ENCODE measurements at regions of chr14 and their contacts with region 1.

Region 1: DNA sequence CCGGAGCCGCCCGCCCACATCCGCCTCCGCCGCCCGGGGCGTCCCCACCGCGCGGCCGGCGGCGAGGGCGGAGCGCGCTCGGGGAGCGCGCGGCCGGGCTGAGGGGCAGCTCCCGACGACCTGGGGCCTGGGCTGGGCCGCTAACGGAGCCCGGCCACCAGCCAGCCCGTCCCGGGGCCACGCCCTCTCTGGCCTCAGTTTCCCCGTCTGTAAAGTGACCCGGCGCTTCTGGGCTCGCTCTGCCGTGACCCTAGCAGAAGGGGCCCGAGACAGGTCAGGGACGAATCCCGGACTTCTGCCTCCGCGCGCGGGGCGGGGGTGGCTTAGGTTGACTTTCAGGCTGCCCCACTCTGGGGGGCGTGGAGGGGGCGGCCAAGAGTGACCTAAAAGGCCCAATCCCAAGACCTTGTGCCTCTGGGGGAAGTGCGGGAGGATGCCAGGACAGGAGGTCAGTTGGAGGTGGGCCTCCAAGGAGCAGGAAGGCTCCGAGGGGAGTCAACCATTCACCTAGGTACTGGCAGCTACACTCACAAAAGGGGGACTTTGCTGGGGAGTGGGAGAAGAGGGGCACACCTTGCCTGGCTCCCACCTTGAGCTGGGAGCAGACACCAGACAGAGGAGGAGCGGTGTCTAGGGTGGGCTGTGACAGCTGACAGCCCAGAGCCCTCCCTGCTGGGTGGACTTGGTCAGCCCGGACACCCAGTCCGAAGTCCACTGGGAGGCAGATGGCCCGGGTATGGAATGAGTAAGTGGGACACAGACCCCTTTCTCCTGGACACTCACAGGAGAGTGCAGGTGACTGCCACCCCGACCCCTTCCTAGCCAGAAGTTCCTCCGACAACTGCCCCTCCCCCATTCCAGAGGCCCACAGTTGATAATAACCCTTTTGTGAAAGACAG is 489 bp upstream of the AKT1 start:
- DNase-seq: peak in 1 of 2 experiments; percentile 38
- H3K4me3 ChIP-seq: peak overlapping the region; percentile 56; the same call in 1 of the 2 replicates
- H3K27ac ChIP-seq: no peak overlapping the region
- H3K4me1 ChIP-seq: peaks cover 25% of the 10 kb centered on the region
- H3K27me3 ChIP-seq: no peaks in the 10 kb centered on the region
- CTCF ChIP-seq: no peak

Region 2: GRCh38 chr14:104820669-104821228 is 24.7 kb after region 1 on chr14:
- CTCF ChIA-PET with region 1: no interaction called
- POLR2A ChIA-PET with region 1: interaction called, 15 read pairs
- intact Hi-C with region 1: no loop called
- DNase-seq: peak in 1 of 2 experiments; percentile 11
- H3K4me3 ChIP-seq: no peak overlapping the region
- H3K27ac ChIP-seq: no peak overlapping the region
- H3K4me1 ChIP-seq: peaks cover 11% of the 10 kb centered on the region; the same call in 1 of the 2 replicates
- H3K27me3 ChIP-seq: no peaks in the 10 kb centered on the region
- CTCF ChIP-seq: no peak

Region 3: DNA sequence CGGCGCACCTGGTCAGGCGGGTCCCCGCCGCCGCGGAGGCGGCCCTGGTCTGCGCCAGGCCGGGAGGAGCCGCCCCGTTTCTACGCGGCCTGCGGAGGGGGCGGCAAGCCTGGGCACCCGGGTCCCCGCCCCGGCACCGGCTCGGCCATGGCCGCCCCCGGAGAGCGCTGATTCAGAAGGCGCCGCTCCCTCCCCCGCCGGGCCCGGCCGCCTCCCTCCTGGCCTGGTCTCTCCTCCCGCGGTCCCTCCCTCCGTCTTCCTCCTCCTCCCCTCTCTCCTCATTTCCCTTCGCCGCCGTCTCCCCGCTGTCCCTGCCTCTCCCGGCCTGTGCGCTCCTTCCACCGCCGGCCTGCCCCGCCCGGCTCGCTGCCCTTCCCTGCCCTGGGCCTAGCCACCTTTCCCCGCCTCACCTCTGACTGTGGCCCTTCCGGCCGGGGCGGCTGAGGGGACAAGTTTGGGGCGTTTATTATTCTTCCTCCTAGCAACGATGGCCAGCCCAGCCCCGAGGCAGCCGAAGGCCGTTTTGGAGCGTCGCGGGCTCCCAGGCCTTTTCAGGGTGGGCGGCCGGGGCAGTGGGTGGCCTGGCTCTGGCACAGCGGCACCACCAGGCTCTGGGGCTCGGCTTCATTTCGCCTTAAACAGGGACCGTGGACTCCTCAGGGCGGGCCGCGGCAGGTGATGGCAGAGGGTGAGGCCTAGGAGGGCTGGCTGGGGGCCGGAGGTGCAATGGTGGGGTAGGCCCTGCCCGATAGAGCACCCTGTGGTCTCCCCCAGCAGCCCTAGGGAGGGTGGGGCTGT is 69.8 kb after region 1 on chr14:
- CTCF ChIA-PET with region 1: no interaction called
- POLR2A ChIA-PET with region 1: no interaction called
- intact Hi-C with region 1: loop called (anchors 2 kb)
- DNase-seq: peak; percentile 54 to 70
- H3K4me3 ChIP-seq: peak overlapping the region; percentile 95
- H3K27ac ChIP-seq: peak overlapping the region; percentile 54
- H3K4me1 ChIP-seq: peaks cover 11% of the 10 kb centered on the region
- H3K27me3 ChIP-seq: no peaks in the 10 kb centered on the region
- CTCF ChIP-seq: no peak